Left colon (tissue), 2 donors: ENCODE measurements at regions of chr15 and their contacts with region 1.

Region 1: GRCh38 chr15:36883713-36884517 is 216.4 kb downstream of the MEIS2 start:
- DNase-seq: peak; percentile 79 to 89
- ATAC-seq: peak; percentile 88

Region 2: DNA sequence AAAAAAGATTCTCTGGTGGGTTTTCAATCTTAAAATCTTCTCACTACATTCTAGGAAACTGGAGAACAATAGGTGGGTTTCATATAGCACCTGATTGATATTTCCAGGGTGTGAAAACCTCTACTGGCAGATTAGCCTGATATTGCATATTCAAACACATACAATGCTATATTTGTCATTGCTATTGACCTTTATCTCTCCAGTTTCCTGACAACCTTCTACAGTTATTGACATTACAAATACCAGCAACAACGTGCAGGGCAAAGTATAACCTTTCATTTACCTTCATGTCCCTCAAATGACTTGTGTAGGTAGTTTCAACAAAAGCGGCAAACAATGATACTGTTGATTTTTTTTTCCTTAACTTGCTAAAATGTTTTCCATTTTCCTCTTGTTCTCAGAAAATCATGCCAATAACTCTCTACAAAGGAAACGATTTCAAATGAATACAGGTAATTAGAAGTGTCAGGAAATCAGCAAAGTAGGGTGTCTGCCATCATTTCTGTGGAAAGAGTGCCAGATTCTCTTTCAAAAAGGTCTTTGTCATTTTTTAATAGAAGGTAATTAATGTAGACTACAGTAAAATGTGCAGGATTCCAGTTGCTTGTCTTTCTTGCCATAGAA is 377.1 kb before region 1 on chr15:
- intact Hi-C with region 1: no loop called
- DNase-seq: no peak
- ATAC-seq: peak; percentile 57

Region 3: GRCh38 chr15:37100109-37100965 is 216.4 kb after region 1 on chr15 and contains the start of gene MEIS2:
- intact Hi-C with region 1: loop called (anchors 10 kb)
- DNase-seq: peak; percentile 84 to 88
- ATAC-seq: peak; percentile 76
- total RNA-seq, gene MEIS2: 3.1 to 11.3 TPM